Thyroid gland (tissue), 4 donors: ENCODE measurements at regions of chr22 and their contacts with region 1.

Region 1: DNA sequence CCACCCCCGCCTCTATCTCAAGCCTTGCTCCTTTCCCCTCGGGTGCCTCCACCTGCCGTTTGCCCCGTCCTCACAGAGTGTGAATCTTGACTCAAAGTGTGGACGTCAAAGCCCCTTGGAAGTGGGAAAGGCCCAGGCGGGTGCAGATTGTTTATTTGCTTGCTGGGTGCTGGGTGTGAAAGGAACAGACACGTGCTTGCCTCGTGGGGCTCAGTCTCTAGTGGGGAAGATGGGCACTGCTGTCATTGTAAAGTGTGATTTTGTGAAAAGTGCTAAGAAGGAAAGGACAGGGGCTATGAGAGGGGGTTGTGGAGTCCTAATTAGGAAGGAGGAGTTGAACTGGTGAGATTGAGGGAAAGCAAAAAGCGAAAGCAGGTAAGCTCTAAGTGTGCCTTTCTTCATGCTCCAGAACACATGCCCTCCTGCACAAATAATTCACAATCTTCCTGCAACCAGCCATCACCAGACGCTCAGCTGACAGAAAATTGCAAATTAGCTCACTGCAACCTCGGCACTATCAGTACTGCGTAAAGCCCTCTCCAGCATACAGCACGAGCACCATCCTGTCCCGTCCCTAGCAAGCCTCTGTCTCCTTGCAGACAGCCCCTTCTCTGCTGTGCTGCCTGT is 9.7 kb upstream of the GCAT start:
- DNase-seq: peak; percentile 60 to 70
- H3K4me3 ChIP-seq: no peak overlapping the region
- H3K27ac ChIP-seq: peak overlapping the region; percentile 68 to 78 (median 70)
- H3K4me1 ChIP-seq: peaks cover 27 to 28% of the 10 kb centered on the region in 2 donors
- H3K27me3 ChIP-seq: no peaks in the 10 kb centered on the region
- CTCF ChIP-seq: no peak
- POLR2A ChIP-seq: peak in 1 of 2 donors; percentile 39

Region 2: GRCh38 chr22:37643225-37643847 is 154.7 kb before region 1 on chr22:
- intact Hi-C with region 1: loop called (anchors 10 kb)
- DNase-seq: peak; percentile 84 to 87
- H3K4me3 ChIP-seq: no peak overlapping the region
- H3K27ac ChIP-seq: no peak overlapping the region
- H3K4me1 ChIP-seq: peaks cover 7 to 23% of the 10 kb centered on the region in 2 donors
- H3K27me3 ChIP-seq: no peaks in the 10 kb centered on the region
- CTCF ChIP-seq: peak; percentile 78 to 96 (median 87)
- POLR2A ChIP-seq: no peak

Region 3: GRCh38 chr22:37676736-37677492 is 121.1 kb before region 1 on chr22:
- intact Hi-C with region 1: loop called (anchors 10 kb)
- DNase-seq: peak; percentile 84 to 85
- H3K4me3 ChIP-seq: peak overlapping the region in 1 of 3 donors; percentile 28
- H3K27ac ChIP-seq: peak overlapping the region; percentile 79 to 92 (median 88)
- H3K4me1 ChIP-seq: peaks cover 27 to 45% of the 10 kb centered on the region in 2 donors
- H3K27me3 ChIP-seq: no peaks in the 10 kb centered on the region
- CTCF ChIP-seq: no peak
- POLR2A ChIP-seq: no peak

Region 4: GRCh38 chr22:37688553-37688952 is 109.4 kb before region 1 on chr22:
- intact Hi-C with region 1: no loop called
- DNase-seq: no peak
- H3K4me3 ChIP-seq: no peak overlapping the region
- H3K27ac ChIP-seq: no peak overlapping the region
- H3K4me1 ChIP-seq: peaks cover 13 to 16% of the 10 kb centered on the region in 2 donors
- H3K27me3 ChIP-seq: no peaks in the 10 kb centered on the region
- CTCF ChIP-seq: no peak
- POLR2A ChIP-seq: no peak

Region 5: GRCh38 chr22:37745548-37746365 is 52.2 kb before region 1 on chr22:
- intact Hi-C with region 1: loop called (anchors 10 kb)
- DNase-seq: peak; percentile 93 to 94
- H3K4me3 ChIP-seq: peak overlapping the region; percentile 56 to 71 (median 63)
- H3K27ac ChIP-seq: peak overlapping the region; percentile 98 to 99 (median 99)
- H3K4me1 ChIP-seq: peaks cover 46 to 75% of the 10 kb centered on the region in 2 donors
- H3K27me3 ChIP-seq: no peaks in the 10 kb centered on the region
- CTCF ChIP-seq: no peak
- POLR2A ChIP-seq: peak in 1 of 2 donors; percentile 71

Region 6: DNA sequence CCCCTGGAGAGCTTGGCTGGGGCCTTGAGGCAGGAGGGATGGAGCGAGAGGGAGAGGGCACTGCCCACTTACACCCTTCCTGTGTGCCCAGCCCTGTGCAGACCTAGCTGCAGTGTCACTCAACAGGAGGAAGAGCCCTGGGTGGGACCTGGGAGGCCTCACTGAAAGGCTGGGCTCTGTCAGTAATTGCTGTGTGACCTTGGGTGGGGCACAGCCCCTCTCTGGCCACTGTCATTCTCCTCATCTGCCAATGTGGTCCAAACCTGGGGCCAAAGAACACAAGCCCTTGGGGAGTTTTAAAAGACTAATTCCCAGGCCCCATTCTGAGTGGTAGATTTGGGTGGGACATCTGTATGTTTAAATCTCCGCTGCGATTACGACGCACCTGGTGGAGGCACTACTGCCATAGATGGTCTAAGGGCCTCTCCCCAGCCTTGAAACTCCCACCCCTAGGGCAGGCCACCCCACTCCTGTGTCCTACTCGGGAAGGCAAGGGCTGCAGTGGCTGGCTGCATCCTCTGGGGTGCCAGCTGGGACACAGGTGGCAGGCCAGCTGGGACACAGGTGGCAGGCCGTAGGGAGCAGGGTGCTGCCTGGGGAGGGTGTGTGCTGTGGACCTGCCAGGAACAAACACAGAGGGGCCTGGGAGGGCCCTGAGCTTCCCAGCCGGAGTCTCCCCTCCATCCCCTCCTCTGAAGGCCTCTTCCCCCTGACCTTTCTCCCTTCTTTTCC is 198.7 kb after region 1 on chr22:
- intact Hi-C with region 1: no loop called
- DNase-seq: no peak
- H3K4me3 ChIP-seq: no peak overlapping the region
- H3K27ac ChIP-seq: no peak overlapping the region
- H3K4me1 ChIP-seq: no peaks in the 10 kb centered on the region
- H3K27me3 ChIP-seq: no peaks in the 10 kb centered on the region
- CTCF ChIP-seq: no peak
- POLR2A ChIP-seq: no peak